A673 (cell line): ENCODE measurements at regions of chr10 and their contacts with region 1.

Region 1: GRCh38 chr10:31603235-31604087 is 284.4 kb downstream of the ZEB1 start:
- DNase-seq: peak; percentile 95
- H3K4me3 ChIP-seq: peak overlapping the region; percentile 62
- H3K27ac ChIP-seq: peak overlapping the region; percentile 69
- H3K4me1 ChIP-seq: peaks cover 13% of the 10 kb centered on the region
- H3K27me3 ChIP-seq: no peaks in the 10 kb centered on the region
- CTCF ChIP-seq: no peak

Region 2: DNA sequence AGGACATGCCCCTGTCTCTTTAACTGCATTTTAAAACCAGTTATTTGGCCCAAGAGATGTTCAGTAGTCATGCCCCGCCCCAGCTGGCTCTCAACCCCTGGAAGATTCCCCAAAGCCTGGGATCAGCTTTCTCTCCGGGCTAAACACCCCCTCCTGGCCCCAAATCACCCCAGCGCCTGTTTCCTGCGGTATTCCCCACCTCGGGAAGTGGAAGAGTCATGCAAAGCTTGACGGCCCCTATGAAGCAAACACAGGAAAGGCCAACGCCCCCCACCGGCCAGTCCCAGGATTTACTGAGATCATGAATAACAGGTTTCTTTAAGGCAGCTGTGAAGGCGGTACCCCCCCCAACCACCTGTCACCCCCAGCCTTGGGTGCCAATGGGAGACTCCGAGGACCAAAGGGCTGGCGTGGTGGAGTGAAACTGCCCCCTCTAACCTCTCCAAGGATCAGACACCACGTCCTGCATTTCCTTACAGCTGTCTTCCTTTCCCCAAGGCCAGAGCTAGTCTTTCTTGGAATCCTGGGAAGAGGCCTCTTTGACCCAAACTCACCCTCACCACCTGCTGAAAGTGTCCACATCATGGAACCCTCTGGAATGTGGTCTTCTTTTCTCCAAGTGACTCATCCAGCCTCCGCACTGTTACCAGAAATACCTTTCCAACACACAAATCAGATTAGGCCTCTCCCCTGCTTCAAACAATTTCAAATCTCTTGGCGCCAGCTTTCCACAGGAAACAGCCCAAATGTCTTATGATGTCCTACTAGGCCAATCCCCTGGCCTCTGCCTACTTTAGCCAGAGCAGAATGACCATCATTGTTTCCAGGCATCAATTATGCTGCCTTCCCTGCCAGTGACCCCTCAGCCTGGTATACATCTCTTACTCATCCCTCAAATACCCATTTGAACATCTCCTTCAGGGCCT is 17.0 kb after region 1 on chr10:
- CTCF ChIA-PET with region 1: no interaction called
- POLR2A ChIA-PET with region 1: interaction called, 10 read pairs
- intact Hi-C with region 1: no loop called
- DNase-seq: no peak
- H3K4me3 ChIP-seq: no peak overlapping the region
- H3K27ac ChIP-seq: no peak overlapping the region
- H3K4me1 ChIP-seq: no peaks in the 10 kb centered on the region
- H3K27me3 ChIP-seq: no peaks in the 10 kb centered on the region
- CTCF ChIP-seq: peak; percentile 37

Region 3: GRCh38 chr10:31650010-31650409 is 46.5 kb after region 1 on chr10:
- CTCF ChIA-PET with region 1: no interaction called
- POLR2A ChIA-PET with region 1: no interaction called
- intact Hi-C with region 1: no loop called
- DNase-seq: peak; percentile 94
- H3K4me3 ChIP-seq: no peak overlapping the region
- H3K27ac ChIP-seq: no peak overlapping the region
- H3K4me1 ChIP-seq: peaks cover 9% of the 10 kb centered on the region
- H3K27me3 ChIP-seq: peaks cover 49% of the 10 kb centered on the region
- CTCF ChIP-seq: no peak

Region 4: GRCh38 chr10:31709028-31709427 is 105.6 kb after region 1 on chr10:
- CTCF ChIA-PET with region 1: no interaction called
- POLR2A ChIA-PET with region 1: no interaction called
- intact Hi-C with region 1: no loop called
- DNase-seq: no peak
- H3K4me3 ChIP-seq: no peak overlapping the region
- H3K27ac ChIP-seq: no peak overlapping the region
- H3K4me1 ChIP-seq: peaks cover 14% of the 10 kb centered on the region
- H3K27me3 ChIP-seq: no peaks in the 10 kb centered on the region
- CTCF ChIP-seq: 0 out of 2 replicates have a peak, but pooled peaks have one; percentile 18

Region 5: DNA sequence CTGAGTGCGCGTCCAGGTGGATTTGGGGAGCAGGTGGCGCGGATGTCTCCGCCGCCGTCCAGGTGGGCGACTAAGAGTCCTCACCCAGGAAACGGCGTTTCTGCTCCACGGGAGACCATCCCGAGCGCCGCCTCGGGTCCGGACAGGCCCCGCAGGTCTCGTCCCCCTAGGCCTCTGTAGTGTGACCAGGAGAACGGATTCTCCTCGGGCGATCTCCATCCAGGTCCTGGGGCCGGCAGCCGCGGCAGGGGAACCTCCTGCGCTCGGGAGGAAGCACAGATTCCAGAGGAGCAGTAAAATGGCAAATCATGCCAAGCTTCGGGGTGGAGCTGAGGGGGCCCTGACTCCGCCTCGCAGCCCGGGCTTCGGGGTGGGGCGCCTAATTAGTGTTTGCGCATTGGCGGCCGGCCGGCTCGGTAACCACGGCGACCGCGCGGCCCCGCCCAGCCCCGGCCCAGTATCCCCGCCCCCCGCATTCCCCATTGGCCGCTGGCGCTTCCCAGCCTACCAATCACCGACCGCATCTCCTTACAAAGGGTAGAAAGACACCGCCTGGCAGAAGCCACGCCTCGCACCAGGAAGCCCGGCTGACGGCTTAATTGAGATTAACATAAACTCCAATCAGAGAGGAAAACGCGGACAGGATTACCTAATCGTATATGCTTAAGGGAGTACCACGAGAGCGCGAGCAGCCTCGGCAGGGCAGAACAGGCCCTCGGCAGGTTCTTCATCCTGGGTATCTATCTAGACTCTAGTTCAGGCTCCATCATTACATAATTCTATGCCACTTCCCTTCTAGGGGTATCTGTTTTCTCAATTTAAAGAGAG is 156.6 kb after region 1 on chr10:
- CTCF ChIA-PET with region 1: no interaction called
- POLR2A ChIA-PET with region 1: no interaction called
- intact Hi-C with region 1: loop called (anchors 5 kb)
- DNase-seq: peak; percentile 99
- H3K4me3 ChIP-seq: peak overlapping the region; percentile 82
- H3K27ac ChIP-seq: peak overlapping the region; percentile 70
- H3K4me1 ChIP-seq: peaks cover 8% of the 10 kb centered on the region
- H3K27me3 ChIP-seq: no peaks in the 10 kb centered on the region
- CTCF ChIP-seq: no peak

Region 6: GRCh38 chr10:32065856-32066255 is 462.4 kb after region 1 on chr10:
- CTCF ChIA-PET with region 1: no interaction called
- POLR2A ChIA-PET with region 1: no interaction called
- intact Hi-C with region 1: no loop called
- DNase-seq: no peak
- H3K4me3 ChIP-seq: no peak overlapping the region
- H3K27ac ChIP-seq: no peak overlapping the region
- H3K4me1 ChIP-seq: no peaks in the 10 kb centered on the region
- H3K27me3 ChIP-seq: no peaks in the 10 kb centered on the region
- CTCF ChIP-seq: no peak